Heart left ventricle (tissue), 16 donors: ENCODE measurements at regions of chr1 and their contacts with region 1.

Region 1: DNA sequence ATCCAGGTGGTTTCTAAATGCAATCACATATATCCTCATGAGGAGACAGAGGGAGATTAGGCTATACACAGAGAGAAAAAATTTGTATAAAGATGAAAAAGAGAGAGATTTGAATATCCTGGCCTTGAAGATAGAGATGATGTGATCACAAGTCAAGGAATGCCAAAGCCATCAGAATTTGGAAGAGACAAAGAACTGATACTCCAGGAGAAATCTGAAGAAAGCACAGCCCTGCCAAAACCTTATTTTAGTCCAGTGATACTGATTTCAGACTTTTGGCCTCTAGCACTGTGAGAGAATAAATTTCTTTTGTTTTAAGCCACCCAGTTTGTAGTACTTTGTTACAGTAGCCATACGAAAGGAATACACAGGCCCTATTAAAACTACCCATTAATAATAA is 33.4 kb downstream of the DOCK7 start:
- DNase-seq: no peak
- ATAC-seq: no peak
- H3K4me3 ChIP-seq: no peak overlapping the region
- H3K27ac ChIP-seq: no peak overlapping the region
- H3K4me1 ChIP-seq: peaks cover 0 to 13% (median 0%) of the 10 kb centered on the region in 12 donors
- H3K27me3 ChIP-seq: no peaks in the 10 kb centered on the region
- CTCF ChIP-seq: no peak
- POLR2A ChIP-seq: no peak

Region 2: GRCh38 chr1:62621907-62622306 is 32.8 kb before region 1 on chr1:
- intact Hi-C with region 1: loop called in 1 of 10 experiments (anchors 5 kb)
- DNase-seq: no peak
- ATAC-seq: peak in 3 of 4 donors; percentile 47 to 71 (median 63)
- H3K4me3 ChIP-seq: no peak overlapping the region
- H3K27ac ChIP-seq: no peak overlapping the region
- H3K4me1 ChIP-seq: peaks cover 0 to 4% (median 0%) of the 10 kb centered on the region in 12 donors
- H3K27me3 ChIP-seq: no peaks in the 10 kb centered on the region
- CTCF ChIP-seq: no peak
- POLR2A ChIP-seq: no peak

Region 3: DNA sequence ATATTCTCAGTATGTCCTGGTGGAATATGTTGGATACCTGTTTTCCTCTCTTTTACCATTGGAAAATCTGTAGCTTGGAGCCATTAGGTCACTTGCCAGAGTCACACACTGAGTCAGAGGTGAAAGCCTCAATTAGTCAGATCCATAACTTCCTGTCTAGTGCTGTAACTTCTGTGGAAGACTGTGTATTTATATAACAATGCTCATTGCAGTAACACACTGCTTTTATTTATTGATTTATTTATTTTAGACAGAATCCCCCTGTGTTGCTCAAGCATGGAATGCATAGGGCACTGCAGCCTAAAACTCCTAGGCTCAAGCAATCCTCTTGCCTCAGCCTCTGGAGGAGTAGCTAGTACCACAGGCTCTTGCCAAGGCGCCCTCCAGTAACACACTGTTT is 34.8 kb after region 1 on chr1:
- intact Hi-C with region 1: no loop called
- DNase-seq: no peak
- ATAC-seq: peak in 1 of 4 donors; percentile 57
- H3K4me3 ChIP-seq: peak overlapping the region in 2 of 12 donors; percentile 0 to 12
- H3K27ac ChIP-seq: peak overlapping the region in 10 of 12 donors; percentile 16 to 67 (median 58)
- H3K4me1 ChIP-seq: peaks cover 0 to 52% (median 30%) of the 10 kb centered on the region in 12 donors
- H3K27me3 ChIP-seq: peaks cover 0 to 4% (median 0%) of the 10 kb centered on the region in 9 donors
- CTCF ChIP-seq: no peak
- POLR2A ChIP-seq: no peak